IMR-90 (cell line): ENCODE measurements at regions of chr4 and their contacts with region 1.

Region 1: DNA sequence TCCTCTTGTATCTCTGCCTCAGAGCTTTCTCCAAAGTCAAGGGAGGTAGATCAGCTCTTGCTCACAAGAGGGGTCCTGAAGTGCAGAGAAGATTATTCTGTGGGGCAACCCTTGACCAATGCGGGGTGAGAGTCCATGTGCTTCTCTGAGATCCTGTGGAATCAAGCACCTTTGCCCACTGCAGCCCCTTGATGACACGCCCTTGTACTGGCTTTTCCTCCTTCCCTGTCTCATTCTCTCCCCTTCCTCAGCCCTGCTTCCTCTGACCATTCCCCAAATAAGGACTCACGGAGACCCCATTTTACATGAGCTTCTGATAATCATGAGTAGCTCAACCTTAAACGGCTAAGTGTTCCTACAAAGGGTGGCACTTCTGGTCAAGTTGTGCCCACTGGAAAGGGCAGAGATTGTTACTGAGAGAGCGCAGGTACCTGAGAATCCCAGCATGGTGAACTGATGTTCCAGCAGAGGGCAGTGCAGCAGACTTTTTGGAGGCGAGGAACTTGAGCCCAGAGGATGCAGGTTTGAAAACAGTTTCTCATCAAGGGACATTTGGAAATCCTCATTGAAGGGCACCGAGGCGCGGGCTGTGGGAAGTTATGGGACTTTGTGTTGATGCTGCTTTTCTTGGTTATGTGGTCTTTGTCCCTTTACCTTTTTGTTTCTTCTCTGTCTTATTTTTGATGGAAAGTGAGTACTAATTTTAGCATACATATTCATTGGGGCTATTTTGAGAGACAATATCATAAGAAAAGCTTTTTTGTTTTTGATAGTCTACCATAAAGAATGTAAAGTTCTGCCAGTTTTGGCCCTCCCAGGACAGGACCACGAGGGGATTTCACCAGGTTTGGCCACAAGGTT is 201.3 kb downstream of the RBM46 start:
- DNase-seq: peak; percentile 48
- ATAC-seq: peak; percentile 69
- H3K4me3 ChIP-seq: no peak overlapping the region
- H3K27ac ChIP-seq: no peak overlapping the region
- H3K4me1 ChIP-seq: no peaks in the 10 kb centered on the region
- H3K27me3 ChIP-seq: no peaks in the 10 kb centered on the region
- CTCF ChIP-seq: peak; percentile 58
- POLR2A ChIP-seq: no peak
- RAD21 ChIP-seq: peak; percentile 60

Region 2: DNA sequence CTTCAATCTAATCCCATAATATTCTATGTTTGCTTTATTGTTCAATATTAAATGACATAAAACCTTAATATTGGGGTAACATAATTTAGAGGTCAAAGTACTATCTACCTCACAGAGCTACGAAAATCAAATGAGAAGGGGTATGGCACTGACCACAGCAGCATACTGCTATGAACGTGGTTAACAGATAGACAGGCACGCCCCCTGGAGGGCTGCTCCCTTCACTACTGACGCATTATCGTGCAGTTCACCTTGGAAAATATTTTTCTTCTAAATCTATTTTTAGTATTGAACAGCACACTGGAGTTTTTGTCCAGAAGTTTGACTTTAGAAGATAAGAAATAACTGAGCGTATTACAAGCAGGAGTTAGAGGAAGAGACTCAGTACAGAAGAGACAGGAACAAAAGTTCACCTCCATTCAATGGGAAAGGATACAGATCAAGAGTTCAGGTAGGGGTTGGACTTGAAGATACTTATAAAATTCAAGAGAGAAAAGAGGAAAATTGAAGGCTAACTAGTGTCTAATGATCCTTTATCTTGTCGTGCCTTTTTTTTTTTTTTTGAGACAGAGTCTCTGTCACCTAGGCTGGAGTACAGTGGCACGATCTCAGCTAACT is 371.6 kb after region 1 on chr4:
- CTCF ChIA-PET with region 1: no interaction called
- POLR2A ChIA-PET with region 1: no interaction called
- dilution Hi-C with region 1: no loop called
- in situ Hi-C with region 1: no loop called
- intact Hi-C with region 1: loop called (anchors 1 kb)
- DNase-seq: peak; percentile 46
- ATAC-seq: peak; percentile 95
- H3K4me3 ChIP-seq: no peak overlapping the region
- H3K27ac ChIP-seq: no peak overlapping the region
- H3K4me1 ChIP-seq: no peaks in the 10 kb centered on the region
- H3K27me3 ChIP-seq: no peaks in the 10 kb centered on the region
- CTCF ChIP-seq: peak; percentile 68
- POLR2A ChIP-seq: no peak
- RAD21 ChIP-seq: peak; percentile 65

Region 3: GRCh38 chr4:155371432-155372043 is 389.1 kb after region 1 on chr4:
- CTCF ChIA-PET with region 1: no interaction called
- POLR2A ChIA-PET with region 1: no interaction called
- dilution Hi-C with region 1: no loop called
- in situ Hi-C with region 1: loop called (anchors 10 kb)
- intact Hi-C with region 1: loop called (anchors 1 kb)
- DNase-seq: peak; percentile 21
- ATAC-seq: peak; percentile 45; the same call in 1 of the 2 replicates
- H3K4me3 ChIP-seq: no peak overlapping the region
- H3K27ac ChIP-seq: no peak overlapping the region
- H3K4me1 ChIP-seq: no peaks in the 10 kb centered on the region
- H3K27me3 ChIP-seq: no peaks in the 10 kb centered on the region
- CTCF ChIP-seq: peak; percentile 46
- POLR2A ChIP-seq: no peak
- RAD21 ChIP-seq: peak; percentile 42

Region 4: DNA sequence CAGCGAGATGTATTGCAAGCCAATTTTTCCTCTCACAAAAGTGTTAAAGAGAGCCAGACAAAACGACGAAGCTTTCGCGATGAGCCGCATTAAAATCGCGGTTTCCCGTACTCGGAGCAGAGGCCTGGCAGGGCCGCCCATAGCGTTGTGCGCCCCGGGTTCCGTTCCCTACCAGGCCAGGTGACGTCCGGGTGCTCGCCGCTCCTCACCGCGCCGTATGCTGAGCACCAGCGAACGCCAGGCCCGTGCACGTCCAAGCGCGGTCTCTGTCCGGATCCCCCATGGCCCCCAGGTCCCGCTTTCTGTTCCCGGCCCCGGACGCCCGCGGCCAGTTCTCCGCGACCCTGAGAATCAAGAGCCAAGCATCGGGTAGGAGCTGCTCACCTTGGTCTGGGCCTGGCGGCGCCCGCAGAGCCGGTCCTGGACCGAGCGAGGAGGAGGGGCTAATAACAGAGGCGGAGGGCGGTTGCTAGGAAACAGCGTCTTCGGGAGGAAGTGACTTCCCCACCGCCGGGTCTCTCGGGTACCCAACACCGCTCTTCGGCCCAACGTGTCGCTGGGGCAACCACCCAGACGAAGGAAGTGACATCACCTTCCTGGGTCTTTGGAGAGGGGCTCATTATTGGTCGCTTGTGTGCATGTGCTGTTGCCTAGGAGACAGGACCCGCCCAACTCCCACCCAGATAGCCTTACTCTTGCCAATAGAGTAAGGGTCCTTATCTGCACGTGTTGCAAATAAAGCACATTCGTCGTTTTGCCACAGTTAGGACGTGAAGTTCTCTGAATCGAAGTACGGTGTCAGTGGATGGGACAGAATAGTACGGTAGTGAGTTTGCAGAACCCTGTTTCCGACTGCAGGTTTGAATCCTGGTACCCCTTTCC is 394.2 kb after region 1 on chr4 and contains the start of gene MAP9:
- CTCF ChIA-PET with region 1: interaction called, 4 read pairs
- POLR2A ChIA-PET with region 1: no interaction called
- dilution Hi-C with region 1: no loop called
- in situ Hi-C with region 1: loop called (anchors 10 kb)
- intact Hi-C with region 1: loop called (anchors 1 kb)
- DNase-seq: peak; percentile 93
- ATAC-seq: peak; percentile 96
- H3K4me3 ChIP-seq: peak within 1 kb of the TSS; percentile 62
- H3K27ac ChIP-seq: no peak within 1 kb of the TSS
- H3K4me1 ChIP-seq: no peaks in the 10 kb centered on the region
- H3K27me3 ChIP-seq: no peaks in the 10 kb centered on the region; the same call in 1 of the 2 replicates
- CTCF ChIP-seq: no peak
- POLR2A ChIP-seq: no peak; the same call in 1 of the 2 replicates
- RAD21 ChIP-seq: no peak
- total RNA-seq, gene MAP9: 6.6 and 9.2 TPM in 2 replicates